HepG2 (cell line): ENCODE measurements at regions of chr17 and their contacts with region 1.

Region 1: DNA sequence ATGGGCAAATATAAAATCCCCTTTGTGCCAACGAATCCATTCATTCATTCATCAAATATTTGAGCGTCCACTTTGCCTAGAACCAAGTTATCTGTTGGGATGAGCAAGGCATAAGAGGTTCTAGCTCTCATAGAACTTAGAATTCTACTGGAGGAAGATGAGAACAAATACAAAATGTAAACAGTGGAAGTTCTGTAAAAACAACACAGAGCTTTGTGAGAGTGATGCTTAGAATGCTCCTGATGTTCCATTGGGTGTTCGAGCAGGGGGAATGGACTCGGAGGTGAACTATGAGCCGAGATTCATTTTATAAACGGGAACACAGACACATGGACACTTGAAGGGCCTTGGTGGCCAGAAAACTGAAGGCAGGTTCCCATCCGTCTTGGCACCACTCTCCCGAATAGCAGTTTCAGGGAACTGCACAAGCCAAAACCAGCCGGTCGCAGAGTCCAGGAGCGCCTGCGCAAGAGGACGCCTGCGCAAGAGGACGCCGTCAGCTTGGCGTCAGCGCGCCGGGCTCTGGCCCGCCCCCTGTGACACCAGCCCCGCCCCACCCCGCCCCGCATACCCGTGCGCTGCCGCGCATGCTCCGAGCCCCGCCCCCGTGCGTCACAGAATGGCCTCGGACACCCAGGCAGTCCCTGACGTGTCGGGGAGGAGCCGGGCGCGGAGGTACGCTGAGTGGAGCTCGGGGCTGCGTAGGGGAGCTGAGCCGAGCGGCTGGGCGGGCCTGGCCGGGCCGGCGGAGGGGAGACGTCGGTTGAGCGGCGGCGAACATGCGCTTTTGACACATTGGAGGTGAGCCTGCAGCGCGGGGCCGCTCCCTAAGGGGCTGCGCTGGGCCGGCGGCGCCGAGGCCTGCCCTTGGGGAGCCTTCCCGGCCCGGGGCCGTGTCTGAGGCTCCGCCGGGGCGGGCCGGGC is at the start of gene NDEL1:
- DNase-seq: peak; percentile 92
- ATAC-seq: peak; percentile 99
- H3K4me3 ChIP-seq: peak within 1 kb of the TSS; percentile 92 to 99 (median 97)
- H3K27ac ChIP-seq: peak within 1 kb of the TSS; percentile 93
- H3K4me1 ChIP-seq: peaks cover 48% of the 10 kb centered on the region
- H3K27me3 ChIP-seq: no peaks in the 10 kb centered on the region; a peak in 1 of 5 replicates
- CTCF ChIP-seq: no peak
- EP300 ChIP-seq: no peak
- POLR2A ChIP-seq: peak; percentile 90 to 96
- RAD21 ChIP-seq: peak; percentile 27; the same call in 1 of the 2 replicates
- total RNA-seq, gene NDEL1: 47.8 and 59.8 TPM in 2 replicates

Region 2: DNA sequence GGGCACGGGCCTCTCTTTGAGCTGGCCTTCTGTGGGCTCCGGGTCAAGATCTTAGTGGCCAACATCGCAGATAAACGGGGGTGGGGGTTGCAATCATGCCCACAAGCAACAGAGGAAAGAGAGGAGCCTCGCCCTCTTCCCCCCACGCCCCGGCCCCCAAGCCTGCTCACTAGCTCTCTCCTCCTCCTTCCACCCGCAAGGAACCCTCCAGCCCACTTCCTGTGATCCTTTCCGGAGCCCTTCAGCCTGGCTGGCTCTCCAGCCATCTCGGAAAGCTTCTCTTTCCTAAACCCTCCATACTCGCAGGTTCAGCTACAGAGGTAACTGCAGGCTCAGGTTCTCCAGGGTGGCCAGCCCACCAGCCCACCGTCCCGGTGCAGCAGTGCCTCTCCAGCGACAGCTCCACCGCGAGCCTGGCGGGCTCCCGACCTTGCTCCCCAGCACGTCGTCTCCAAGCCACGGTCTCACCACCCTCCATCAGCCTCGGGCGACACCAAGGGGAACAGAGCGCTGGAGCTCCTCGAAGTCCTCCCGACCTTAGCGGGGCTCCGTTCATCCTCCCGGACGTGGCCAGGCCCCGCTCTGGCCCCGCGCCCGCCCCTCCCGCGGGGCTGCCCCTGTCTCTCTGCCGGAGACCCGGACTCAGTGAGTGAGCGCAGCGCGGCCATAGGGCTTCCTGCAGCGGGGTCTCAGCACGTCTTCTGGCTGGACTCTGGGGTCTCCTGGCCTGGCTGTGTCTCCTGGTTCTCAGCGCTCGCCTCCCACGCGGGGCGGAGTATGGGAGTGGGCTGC is 108.8 kb before region 1 on chr17:
- CTCF ChIA-PET with region 1: no interaction called
- POLR2A ChIA-PET with region 1: no interaction called
- in situ Hi-C with region 1: no loop called
- intact Hi-C with region 1: no loop called
- DNase-seq: no peak
- ATAC-seq: peak; percentile 82
- H3K4me3 ChIP-seq: peak overlapping the region; percentile 47 to 75 (median 48); a peak in 5 of 6 replicates
- H3K27ac ChIP-seq: no peak overlapping the region
- H3K4me1 ChIP-seq: peaks cover 29% of the 10 kb centered on the region
- H3K27me3 ChIP-seq: peaks cover 2 to 34% of the 10 kb centered on the region in 2 experiments; a peak in 4 of 5 replicates
- CTCF ChIP-seq: peak; percentile 36
- EP300 ChIP-seq: no peak
- POLR2A ChIP-seq: no peak
- RAD21 ChIP-seq: no peak

Region 3: DNA sequence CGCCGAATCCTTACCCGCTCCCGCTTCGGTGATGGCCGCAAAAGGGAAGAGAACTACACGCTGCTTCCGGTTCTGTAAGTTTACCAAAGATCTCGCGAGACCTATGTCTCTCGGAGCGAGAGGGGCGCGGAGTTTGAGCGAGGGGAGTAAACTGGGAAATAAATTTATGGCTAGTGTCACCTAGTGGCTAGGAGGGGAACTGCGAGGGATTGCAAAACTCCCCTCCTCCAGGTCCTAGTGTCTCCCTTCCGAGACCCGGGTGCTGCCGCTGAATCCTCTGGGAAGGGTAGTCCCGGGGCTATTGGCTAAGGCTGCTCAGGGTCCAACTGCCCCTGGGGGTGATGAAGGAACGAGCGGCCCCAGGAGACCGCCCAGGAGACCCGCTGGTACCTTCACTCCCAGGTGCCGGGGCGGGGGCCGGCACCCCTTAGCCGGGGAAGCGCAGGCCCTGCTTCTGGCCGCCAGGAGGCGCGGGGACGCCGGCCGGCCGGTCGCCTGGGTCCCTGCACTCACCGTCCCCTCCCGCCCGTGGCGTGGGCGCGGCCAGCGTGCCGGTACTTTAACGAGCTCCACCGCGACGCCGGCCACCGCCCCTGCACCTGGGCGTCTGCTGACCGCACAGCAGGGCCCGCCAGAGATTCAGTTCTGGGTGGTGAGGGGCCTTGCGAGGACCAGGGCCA is 52.2 kb before region 1 on chr17 and contains the start of gene RPL26:
- CTCF ChIA-PET with region 1: no interaction called
- POLR2A ChIA-PET with region 1: interaction called, 11 read pairs
- in situ Hi-C with region 1: no loop called
- intact Hi-C with region 1: loop called (anchors 10 kb)
- DNase-seq: peak; percentile 98
- ATAC-seq: peak; percentile 89
- H3K4me3 ChIP-seq: peak within 1 kb of the TSS; percentile 82 to 90 (median 87)
- H3K27ac ChIP-seq: peak within 1 kb of the TSS; percentile 64
- H3K4me1 ChIP-seq: peaks cover 53% of the 10 kb centered on the region
- H3K27me3 ChIP-seq: no peaks in the 10 kb centered on the region; a peak in 1 of 5 replicates
- CTCF ChIP-seq: peak; percentile 89
- EP300 ChIP-seq: peak in 1 of 2 experiments; percentile 28; a peak in 1 of 4 replicates
- POLR2A ChIP-seq: peak; percentile 96 to 97
- RAD21 ChIP-seq: peak; percentile 81; the same call in 1 of the 2 replicates
- total RNA-seq, gene RPL26: 2,817 and 3,645 TPM in 2 replicates

Region 4: GRCh38 chr17:8409966-8410864 is 25.3 kb before region 1 on chr17:
- CTCF ChIA-PET with region 1: interaction called, 10 read pairs
- POLR2A ChIA-PET with region 1: interaction called, 16 read pairs
- in situ Hi-C with region 1: no loop called
- intact Hi-C with region 1: no loop called
- DNase-seq: peak; percentile 80
- ATAC-seq: peak; percentile 80
- H3K4me3 ChIP-seq: peak overlapping the region in 1 of 3 experiments; percentile 30; a peak in 1 of 6 replicates
- H3K27ac ChIP-seq: no peak overlapping the region
- H3K4me1 ChIP-seq: peaks cover 64% of the 10 kb centered on the region
- H3K27me3 ChIP-seq: no peaks in the 10 kb centered on the region
- CTCF ChIP-seq: peak; percentile 94
- EP300 ChIP-seq: no peak
- POLR2A ChIP-seq: no peak
- RAD21 ChIP-seq: peak; percentile 78

Region 5: GRCh38 chr17:8420041-8420934 is 15.2 kb before region 1 on chr17:
- CTCF ChIA-PET with region 1: no interaction called
- POLR2A ChIA-PET with region 1: interaction called, 42 read pairs
- in situ Hi-C with region 1: no loop called
- intact Hi-C with region 1: no loop called
- DNase-seq: peak; percentile 97
- ATAC-seq: peak; percentile 95
- H3K4me3 ChIP-seq: peak overlapping the region in 1 of 3 experiments; percentile 13; a peak in 1 of 6 replicates
- H3K27ac ChIP-seq: peak overlapping the region; percentile 70
- H3K4me1 ChIP-seq: peaks cover 75% of the 10 kb centered on the region
- H3K27me3 ChIP-seq: no peaks in the 10 kb centered on the region
- CTCF ChIP-seq: no peak
- EP300 ChIP-seq: peak; percentile 71 to 95; a peak in 3 of 4 replicates
- POLR2A ChIP-seq: no peak
- RAD21 ChIP-seq: 0 out of 2 replicates have a peak, but pooled peaks have one; percentile 30